ENCODE measurements at regions of chr16 and their contacts with region 1.

Region 1: GRCh38 chr16:24539291-24539849 is at the start of gene RBBP6:
- DNase-seq: peak; percentile 76
- ATAC-seq: peak; percentile 90
- H3K4me3 ChIP-seq: peak within 1 kb of the TSS; percentile 79
- H3K27ac ChIP-seq: peak within 1 kb of the TSS; percentile 97
- H3K4me1 ChIP-seq: peaks cover 3% of the 10 kb centered on the region; the same call in 1 of the 2 replicates
- H3K27me3 ChIP-seq: no peaks in the 10 kb centered on the region
- CTCF ChIP-seq: peak; percentile 19 to 50 (median 29); a peak in 3 of 6 replicates
- EP300 ChIP-seq: no peak
- POLR2A ChIP-seq: peak; percentile 99
- RAD21 ChIP-seq: 0 out of 2 replicates have a peak, but pooled peaks have one; percentile 11
- polyA plus RNA-seq, gene RBBP6: 16.9 to 23.4 TPM

Region 2: DNA sequence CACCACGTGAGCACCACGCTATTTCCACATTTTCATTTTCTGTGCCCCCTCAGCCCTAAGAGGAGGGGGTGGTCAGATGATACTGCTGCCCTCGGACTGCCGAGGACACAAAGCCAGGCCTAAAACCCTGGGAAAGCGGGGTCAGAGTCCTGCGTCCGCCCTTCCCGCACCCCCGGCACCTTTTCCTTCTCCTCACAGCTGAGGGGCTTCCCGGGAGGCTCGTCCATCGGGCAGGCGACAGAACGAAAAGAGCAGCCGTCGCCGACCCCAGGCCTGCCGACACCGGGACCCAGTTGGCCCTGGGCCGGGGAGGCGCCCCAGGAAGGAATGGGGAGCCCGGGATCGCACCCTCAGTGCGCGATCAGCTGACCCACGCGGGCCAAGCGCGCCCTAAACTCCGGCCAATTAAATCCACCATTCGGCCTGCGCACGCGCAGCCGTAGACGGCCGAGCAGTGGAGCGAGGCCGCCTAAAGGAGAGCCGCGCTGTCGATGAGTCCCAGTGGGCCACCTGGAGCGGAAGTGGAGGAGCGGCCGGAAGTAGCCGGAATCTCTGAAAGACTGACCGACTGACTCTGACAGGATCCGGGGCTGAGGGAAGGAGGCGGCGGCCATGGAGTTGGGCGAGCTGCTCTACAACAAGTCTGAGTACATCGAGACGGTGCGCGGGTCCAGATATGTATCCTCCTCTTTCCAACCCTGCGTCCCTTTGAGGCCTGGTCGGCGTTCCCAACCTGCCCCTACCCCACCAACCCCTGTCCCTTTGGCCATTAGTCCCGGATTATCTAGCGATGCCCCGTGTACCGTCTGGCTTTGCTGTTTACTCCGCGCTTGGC is 898.2 kb before region 1 on chr16 and contains the starts of genes DCTN5 and PALB2:
- CTCF ChIA-PET with region 1: no interaction called
- POLR2A ChIA-PET with region 1: no interaction called
- RAD21 ChIA-PET with region 1: no interaction called
- SMC1A ChIA-PET with region 1: no interaction called
- in situ Hi-C with region 1: no loop called
- intact Hi-C with region 1: loop called (anchors 10 kb)
- DNase-seq: peak; percentile 83
- ATAC-seq: peak; percentile 96
- H3K4me3 ChIP-seq: peak within 1 kb of the TSS; percentile 92
- H3K27ac ChIP-seq: peak within 1 kb of the TSS; percentile 84
- H3K4me1 ChIP-seq: peaks cover 3% of the 10 kb centered on the region; the same call in 1 of the 2 replicates
- H3K27me3 ChIP-seq: no peaks in the 10 kb centered on the region
- CTCF ChIP-seq: no peak
- EP300 ChIP-seq: no peak
- POLR2A ChIP-seq: peak; percentile 85
- RAD21 ChIP-seq: no peak
- polyA plus RNA-seq, gene DCTN5: 69.2 to 72.5 TPM
- polyA plus RNA-seq, gene PALB2: 9.2 to 15.1 TPM

Region 3: DNA sequence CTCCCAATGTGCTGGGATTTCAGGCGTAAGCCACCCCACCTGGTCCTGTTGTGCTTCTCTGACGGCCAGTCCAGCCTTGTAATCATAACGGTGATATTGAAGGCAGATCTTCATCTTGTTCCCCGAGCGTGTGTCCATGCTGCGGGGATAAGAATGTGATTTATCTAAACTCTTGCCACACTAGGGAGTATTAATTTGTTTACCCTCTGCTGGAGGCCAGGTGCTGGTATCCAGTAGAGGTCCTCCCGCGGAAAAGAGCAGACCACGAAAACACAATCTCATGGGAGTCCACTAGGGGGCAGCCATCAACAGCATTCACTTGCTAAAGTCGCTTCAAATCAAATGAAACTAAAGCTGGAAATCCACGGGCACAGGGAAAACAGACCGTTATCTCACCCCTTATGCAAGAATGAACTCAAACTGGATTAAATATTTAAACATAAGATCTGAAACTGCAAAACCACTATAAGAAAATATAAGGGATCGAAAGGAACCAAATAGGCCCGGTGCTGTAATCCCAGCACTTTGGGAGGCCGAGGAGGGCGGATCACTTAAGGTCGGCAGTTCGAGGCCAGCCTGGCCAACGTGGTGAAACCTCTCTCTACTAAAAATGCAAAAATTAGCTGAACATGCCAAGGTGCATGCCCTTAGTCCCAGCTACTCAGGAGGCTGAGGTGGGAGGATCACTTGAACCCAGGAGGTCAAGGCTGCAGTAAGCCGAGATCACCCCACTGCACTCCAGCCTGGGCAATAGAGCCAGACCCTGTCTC is 22.3 kb before region 1 on chr16:
- CTCF ChIA-PET with region 1: interaction called, 13 read pairs
- POLR2A ChIA-PET with region 1: no interaction called
- RAD21 ChIA-PET with region 1: no interaction called
- SMC1A ChIA-PET with region 1: interaction called, 3 read pairs
- in situ Hi-C with region 1: no loop called
- intact Hi-C with region 1: no loop called
- DNase-seq: peak; percentile 38
- ATAC-seq: peak; percentile 90
- H3K4me3 ChIP-seq: no peak overlapping the region
- H3K27ac ChIP-seq: no peak overlapping the region
- H3K4me1 ChIP-seq: no peaks in the 10 kb centered on the region
- H3K27me3 ChIP-seq: no peaks in the 10 kb centered on the region; a peak in 1 of 4 replicates
- CTCF ChIP-seq: peak; percentile 90 to 92 (median 91)
- EP300 ChIP-seq: no peak
- POLR2A ChIP-seq: no peak
- RAD21 ChIP-seq: peak; percentile 91

Region 4: DNA sequence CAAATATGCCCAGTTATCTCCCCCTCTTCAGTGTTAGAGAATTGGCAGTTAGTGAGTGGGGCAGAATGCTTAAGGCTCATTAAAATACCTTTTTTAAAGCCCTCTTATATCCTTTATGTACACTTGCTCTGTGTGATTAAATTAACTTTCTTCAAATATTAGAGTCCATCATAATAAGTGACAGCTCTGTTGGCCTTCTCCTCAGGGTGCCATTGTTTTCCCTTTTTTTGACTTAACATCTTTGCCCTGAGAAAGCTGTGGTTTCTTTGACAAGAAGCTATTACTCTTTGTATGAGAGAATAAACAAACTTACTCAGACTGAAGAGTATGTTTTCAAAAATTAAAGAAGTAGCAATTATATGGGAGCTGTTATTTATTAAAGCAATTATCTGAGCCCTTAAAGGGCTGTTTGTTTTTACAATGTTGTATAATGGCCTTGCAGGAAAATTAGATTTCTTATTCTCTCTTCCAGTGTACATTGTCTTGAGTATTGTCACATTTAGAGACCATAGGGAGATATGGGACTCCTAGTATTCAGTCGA is 13.4 kb after region 1 on chr16:
- CTCF ChIA-PET with region 1: interaction called, 17 read pairs
- POLR2A ChIA-PET with region 1: interaction called, 7 read pairs
- RAD21 ChIA-PET with region 1: interaction called, 7 read pairs
- SMC1A ChIA-PET with region 1: interaction called, 19 read pairs
- in situ Hi-C with region 1: no loop called
- intact Hi-C with region 1: no loop called
- DNase-seq: no peak
- ATAC-seq: no peak; the same call in 2 of the 3 replicates
- H3K4me3 ChIP-seq: no peak overlapping the region
- H3K27ac ChIP-seq: no peak overlapping the region
- H3K4me1 ChIP-seq: no peaks in the 10 kb centered on the region
- H3K27me3 ChIP-seq: no peaks in the 10 kb centered on the region
- CTCF ChIP-seq: no peak
- EP300 ChIP-seq: no peak
- POLR2A ChIP-seq: no peak
- RAD21 ChIP-seq: no peak

Region 5: GRCh38 chr16:24668481-24669061 is 129.2 kb after region 1 on chr16:
- CTCF ChIA-PET with region 1: no interaction called
- POLR2A ChIA-PET with region 1: interaction called, 3 read pairs
- RAD21 ChIA-PET with region 1: no interaction called
- SMC1A ChIA-PET with region 1: interaction called, 3 read pairs
- in situ Hi-C with region 1: no loop called
- intact Hi-C with region 1: loop called (anchors 5 kb)
- DNase-seq: no peak
- ATAC-seq: peak; percentile 48
- H3K4me3 ChIP-seq: no peak overlapping the region
- H3K27ac ChIP-seq: no peak overlapping the region
- H3K4me1 ChIP-seq: peaks cover 25% of the 10 kb centered on the region
- H3K27me3 ChIP-seq: no peaks in the 10 kb centered on the region
- CTCF ChIP-seq: no peak
- EP300 ChIP-seq: no peak
- POLR2A ChIP-seq: no peak
- RAD21 ChIP-seq: no peak

Measured in GM12878 (cell line).